ENCODE measurements at regions of chr1 and their contacts with region 1.

Region 1: DNA sequence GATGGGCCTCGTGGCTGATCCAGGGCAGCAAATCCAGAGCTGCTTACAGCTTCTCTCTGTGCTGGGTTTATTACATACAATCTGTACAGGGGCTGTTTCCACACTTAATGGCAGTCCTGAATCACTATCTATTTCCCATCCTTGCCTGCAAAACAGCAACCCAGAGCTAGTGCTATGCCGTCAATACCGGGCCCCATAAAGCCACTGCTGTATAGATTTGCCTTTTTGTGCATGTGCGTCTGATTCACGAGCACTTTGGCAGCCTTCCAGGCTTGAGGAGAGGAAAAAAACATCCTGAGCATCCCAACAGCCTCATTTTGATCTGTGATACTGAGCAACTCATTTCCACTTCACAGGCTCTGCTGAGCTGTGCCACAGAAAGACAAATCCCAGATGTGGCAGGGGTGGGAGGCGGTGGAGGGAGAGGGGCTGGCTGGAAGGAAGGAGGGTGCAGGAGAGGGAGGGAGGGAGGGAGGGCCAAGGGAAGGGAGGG is 65.2 kb upstream of the TARBP1 start:
- DNase-seq: peak; percentile 86
- H3K4me3 ChIP-seq: no peak overlapping the region; a peak in 1 of 4 replicates
- H3K27ac ChIP-seq: peak overlapping the region; percentile 92 to 100
- H3K4me1 ChIP-seq: peaks cover 23 to 67% of the 10 kb centered on the region in 2 experiments
- H3K27me3 ChIP-seq: no peaks in the 10 kb centered on the region
- CTCF ChIP-seq: no peak
- EP300 ChIP-seq: peak; percentile 88 to 94
- RAD21 ChIP-seq: peak; percentile 30; the same call in 1 of the 2 replicates

Region 2: DNA sequence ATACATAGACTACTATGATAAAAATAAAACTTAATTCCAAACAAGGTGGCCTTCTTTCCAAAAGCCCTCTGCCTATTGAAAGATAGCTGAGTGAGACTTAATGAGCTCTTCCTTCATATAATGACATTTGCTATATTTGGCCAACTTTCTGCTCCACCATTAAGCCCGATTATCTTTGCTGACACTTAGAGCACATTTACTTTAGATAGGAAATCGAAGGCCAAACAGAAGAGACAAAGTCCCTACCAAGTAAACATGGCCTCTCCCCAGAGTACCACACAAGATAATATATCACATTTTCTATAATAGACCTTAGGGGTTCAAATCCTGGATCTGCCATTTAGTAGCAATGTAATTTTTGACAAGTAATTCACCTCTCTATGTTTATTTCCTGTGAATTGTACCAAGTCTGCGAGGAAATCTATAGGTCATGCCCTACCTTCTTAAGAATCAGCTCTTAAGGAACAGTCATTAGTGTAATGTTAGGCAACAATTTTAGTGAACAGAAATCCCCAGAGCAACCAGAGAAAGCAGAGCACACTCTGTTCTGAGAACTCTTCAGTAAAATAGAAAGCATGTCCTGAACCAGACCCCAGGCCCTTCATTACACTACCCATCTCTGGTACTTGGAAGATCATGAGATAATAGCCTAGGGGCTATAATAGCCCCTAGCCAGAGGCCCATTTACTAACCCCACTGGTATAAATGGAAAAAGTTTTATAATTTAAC is 188.2 kb before region 1 on chr1:
- CTCF ChIA-PET with region 1: no interaction called
- POLR2A ChIA-PET with region 1: no interaction called
- DNase-seq: peak; percentile 21
- H3K4me3 ChIP-seq: peak overlapping the region in 1 of 2 experiments; percentile 51; a peak in 1 of 4 replicates
- H3K27ac ChIP-seq: no peak overlapping the region
- H3K4me1 ChIP-seq: no peaks in the 10 kb centered on the region; a peak in 1 of 4 replicates
- H3K27me3 ChIP-seq: no peaks in the 10 kb centered on the region
- CTCF ChIP-seq: no peak
- EP300 ChIP-seq: no peak
- RAD21 ChIP-seq: no peak

Region 3: GRCh38 chr1:234562347-234562751 is 18.2 kb after region 1 on chr1:
- CTCF ChIA-PET with region 1: interaction called, 10 read pairs
- POLR2A ChIA-PET with region 1: interaction called, 13 read pairs
- DNase-seq: peak; percentile 75
- H3K4me3 ChIP-seq: no peak overlapping the region
- H3K27ac ChIP-seq: peak overlapping the region in 1 of 2 experiments; percentile 97; a peak in 2 of 4 replicates
- H3K4me1 ChIP-seq: peaks cover 11 to 52% of the 10 kb centered on the region in 2 experiments; a peak in 3 of 4 replicates
- H3K27me3 ChIP-seq: no peaks in the 10 kb centered on the region
- CTCF ChIP-seq: no peak
- EP300 ChIP-seq: peak in 1 of 2 experiments; percentile 95; a peak in 2 of 4 replicates
- RAD21 ChIP-seq: peak; percentile 45

Region 4: GRCh38 chr1:234599617-234600417 is 55.7 kb after region 1 on chr1:
- CTCF ChIA-PET with region 1: interaction called, 22 read pairs
- POLR2A ChIA-PET with region 1: interaction called, 51 read pairs
- DNase-seq: peak; percentile 93
- H3K4me3 ChIP-seq: peak overlapping the region; percentile 52 to 57
- H3K27ac ChIP-seq: peak overlapping the region; percentile 98 to 100
- H3K4me1 ChIP-seq: peaks cover 39 to 58% of the 10 kb centered on the region in 2 experiments
- H3K27me3 ChIP-seq: no peaks in the 10 kb centered on the region
- CTCF ChIP-seq: 0 out of 2 replicates have a peak, but pooled peaks have one; percentile 5
- EP300 ChIP-seq: no peak
- RAD21 ChIP-seq: no peak

Region 5: GRCh38 chr1:234656856-234657654 is 112.9 kb after region 1 on chr1:
- CTCF ChIA-PET with region 1: no interaction called
- POLR2A ChIA-PET with region 1: no interaction called
- DNase-seq: peak; percentile 39
- H3K4me3 ChIP-seq: no peak overlapping the region
- H3K27ac ChIP-seq: peak overlapping the region in 1 of 2 experiments; percentile 79; a peak in 3 of 4 replicates
- H3K4me1 ChIP-seq: peaks cover 27 to 35% of the 10 kb centered on the region in 2 experiments
- H3K27me3 ChIP-seq: no peaks in the 10 kb centered on the region
- CTCF ChIP-seq: no peak
- EP300 ChIP-seq: peak; percentile 4 to 85; a peak in 2 of 4 replicates
- RAD21 ChIP-seq: no peak

Region 6: GRCh38 chr1:234823191-234824176 is 279.4 kb after region 1 on chr1:
- CTCF ChIA-PET with region 1: no interaction called
- POLR2A ChIA-PET with region 1: no interaction called
- DNase-seq: no peak
- H3K4me3 ChIP-seq: no peak overlapping the region
- H3K27ac ChIP-seq: no peak overlapping the region
- H3K4me1 ChIP-seq: peaks cover 0 to 4% of the 10 kb centered on the region in 2 experiments; a peak in 2 of 4 replicates
- H3K27me3 ChIP-seq: no peaks in the 10 kb centered on the region
- CTCF ChIP-seq: no peak
- EP300 ChIP-seq: no peak
- RAD21 ChIP-seq: no peak

Measured in SK-N-SH (cell line).